Breast epithelium (tissue), 4 donors: ENCODE measurements at regions of chr2 and their contacts with region 1.

Region 1: GRCh38 chr2:165015052-165015642 is 59.8 kb upstream of the SLC38A11 start:
- DNase-seq: no peak
- H3K4me3 ChIP-seq: no peak overlapping the region
- H3K27ac ChIP-seq: no peak overlapping the region
- H3K4me1 ChIP-seq: no peaks in the 10 kb centered on the region
- H3K27me3 ChIP-seq: no peaks in the 10 kb centered on the region
- CTCF ChIP-seq: peak; percentile 8 to 52 (median 37)
- POLR2A ChIP-seq: no peak

Region 2: GRCh38 chr2:163757804-163758203 is 1257.3 kb before region 1 on chr2:
- intact Hi-C with region 1: no loop called
- DNase-seq: no peak
- H3K4me3 ChIP-seq: no peak overlapping the region
- H3K27ac ChIP-seq: no peak overlapping the region
- H3K4me1 ChIP-seq: no peaks in the 10 kb centered on the region
- H3K27me3 ChIP-seq: no peaks in the 10 kb centered on the region
- CTCF ChIP-seq: no peak
- POLR2A ChIP-seq: no peak

Region 3: GRCh38 chr2:164954954-164955701 is 60.0 kb before region 1 on chr2 and contains the start of gene SLC38A11:
- intact Hi-C with region 1: no loop called
- DNase-seq: peak in 1 of 2 donors; percentile 26
- H3K4me3 ChIP-seq: peak within 1 kb of the TSS; percentile 21 to 64 (median 48)
- H3K27ac ChIP-seq: no peak within 1 kb of the TSS
- H3K4me1 ChIP-seq: no peaks in the 10 kb centered on the region
- H3K27me3 ChIP-seq: no peaks in the 10 kb centered on the region
- CTCF ChIP-seq: no peak
- POLR2A ChIP-seq: no peak
- total RNA-seq, gene SLC38A11: 2.2 to 6.7 TPM in 2 of 3 donors, not detected in the other

Region 4: GRCh38 chr2:165032559-165032958 is 17.4 kb after region 1 on chr2:
- intact Hi-C with region 1: no loop called
- DNase-seq: no peak
- H3K4me3 ChIP-seq: no peak overlapping the region
- H3K27ac ChIP-seq: no peak overlapping the region
- H3K4me1 ChIP-seq: no peaks in the 10 kb centered on the region
- H3K27me3 ChIP-seq: no peaks in the 10 kb centered on the region
- CTCF ChIP-seq: no peak
- POLR2A ChIP-seq: no peak

Region 5: GRCh38 chr2:165219481-165219880 is 204.3 kb after region 1 on chr2:
- intact Hi-C with region 1: loop called (anchors 10 kb)
- DNase-seq: no peak
- H3K4me3 ChIP-seq: no peak overlapping the region
- H3K27ac ChIP-seq: no peak overlapping the region
- H3K4me1 ChIP-seq: no peaks in the 10 kb centered on the region
- H3K27me3 ChIP-seq: no peaks in the 10 kb centered on the region
- CTCF ChIP-seq: no peak
- POLR2A ChIP-seq: no peak